PC-3 (cell line): ENCODE measurements at regions of chr2 and their contacts with region 1.

Region 1: GRCh38 chr2:181004650-181005325 is 24.4 kb downstream of the UBE2E3 start:
- DNase-seq: no peak
- ATAC-seq: no peak
- H3K4me3 ChIP-seq: no peak overlapping the region
- H3K27ac ChIP-seq: no peak overlapping the region
- H3K4me1 ChIP-seq: peaks cover 13% of the 10 kb centered on the region
- H3K27me3 ChIP-seq: no peaks in the 10 kb centered on the region
- CTCF ChIP-seq: no peak

Region 2: DNA sequence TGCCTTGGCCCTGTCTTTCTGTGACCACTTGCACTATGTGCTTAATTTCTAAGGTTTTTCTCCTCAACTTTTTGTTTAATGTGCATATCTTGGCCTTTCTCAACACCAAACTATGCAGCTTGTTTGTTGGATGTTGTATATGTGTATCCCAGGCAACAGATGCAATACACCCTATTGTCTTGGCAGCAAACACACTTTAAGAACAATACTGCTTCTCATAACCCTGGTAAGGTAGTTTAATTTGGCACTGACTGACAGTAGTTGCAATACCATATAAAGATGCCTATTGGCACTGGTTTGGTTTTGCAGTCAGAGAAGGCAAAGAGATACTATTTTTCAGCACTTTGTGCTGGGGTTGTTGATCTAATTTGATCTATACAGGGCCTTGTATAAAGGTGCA is 637.0 kb before region 1 on chr2:
- CTCF ChIA-PET with region 1: no interaction called
- POLR2A ChIA-PET with region 1: no interaction called
- intact Hi-C with region 1: loop called (anchors 5 kb)
- DNase-seq: peak; percentile 68
- ATAC-seq: peak; percentile 93
- H3K4me3 ChIP-seq: no peak overlapping the region
- H3K27ac ChIP-seq: peak overlapping the region; percentile 71
- H3K4me1 ChIP-seq: peaks cover 25% of the 10 kb centered on the region
- H3K27me3 ChIP-seq: no peaks in the 10 kb centered on the region
- CTCF ChIP-seq: no peak

Region 3: DNA sequence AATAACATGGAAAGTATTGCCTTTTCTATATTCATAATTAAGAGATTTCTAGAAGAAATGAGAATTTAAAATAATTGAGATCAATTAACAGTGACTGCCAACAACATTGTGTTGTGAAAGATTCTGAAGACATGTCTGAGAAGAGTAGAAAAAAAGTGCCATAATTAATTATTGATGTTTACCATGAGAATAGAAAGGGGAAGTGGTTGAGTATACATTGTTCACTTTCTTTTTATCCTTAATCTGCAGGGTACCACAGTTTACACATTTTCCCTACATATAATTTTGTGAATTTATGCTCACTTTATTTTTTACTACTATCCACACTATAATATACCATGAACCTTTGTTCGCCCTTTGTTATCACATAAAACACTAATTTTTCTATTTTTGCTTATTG is 71.5 kb before region 1 on chr2:
- CTCF ChIA-PET with region 1: no interaction called
- POLR2A ChIA-PET with region 1: no interaction called
- intact Hi-C with region 1: no loop called
- DNase-seq: no peak
- ATAC-seq: no peak
- H3K4me3 ChIP-seq: no peak overlapping the region
- H3K27ac ChIP-seq: no peak overlapping the region
- H3K4me1 ChIP-seq: no peaks in the 10 kb centered on the region
- H3K27me3 ChIP-seq: no peaks in the 10 kb centered on the region
- CTCF ChIP-seq: no peak